Sciatic nerve (tissue), 2 donors: ENCODE measurements at regions of chr7 and their contacts with region 1.

Region 1: GRCh38 chr7:30564243-30564892 is 30.3 kb upstream of the GARS1 start:
- DNase-seq: peak; percentile 89
- ATAC-seq: peak; percentile 90

Region 2: DNA sequence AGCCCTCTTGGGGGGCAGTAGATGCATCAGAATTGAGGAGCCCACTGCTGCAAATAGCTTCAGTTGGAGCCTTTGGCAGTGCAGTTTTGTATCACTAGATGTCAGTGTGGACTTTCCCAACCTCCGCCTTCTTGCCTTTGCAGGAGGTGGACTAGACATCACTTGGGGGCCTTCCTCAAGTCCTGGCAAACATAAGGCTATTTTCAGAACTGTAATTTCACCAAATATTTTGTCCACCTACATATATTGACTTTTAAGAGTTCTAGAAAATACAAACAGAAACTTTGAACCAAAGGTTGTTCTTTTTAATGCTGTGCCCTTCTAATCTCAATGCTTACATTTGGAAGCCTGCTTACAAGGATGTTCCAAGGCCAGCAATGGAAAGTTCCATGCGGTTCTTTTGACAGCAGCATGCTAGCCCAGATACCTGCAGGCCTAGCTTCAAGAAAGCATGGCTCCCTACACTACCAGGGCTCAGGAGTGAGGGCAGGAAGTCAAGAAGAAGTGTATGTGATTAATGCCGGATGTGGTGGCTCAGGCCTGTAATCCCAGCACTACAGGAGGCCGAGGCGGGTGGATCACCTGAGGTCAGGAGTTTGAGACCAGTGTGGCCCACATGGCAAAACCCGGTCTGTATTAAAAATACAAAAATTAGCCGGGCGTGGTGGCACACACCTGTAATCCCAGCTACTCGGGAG is 288.0 kb before region 1 on chr7:
- intact Hi-C with region 1: loop called (anchors 10 kb)
- DNase-seq: no peak
- ATAC-seq: peak; percentile 76

Region 3: GRCh38 chr7:30548762-30549344 is 15.5 kb before region 1 on chr7:
- intact Hi-C with region 1: no loop called
- DNase-seq: peak; percentile 81
- ATAC-seq: peak; percentile 94

Region 4: GRCh38 chr7:30717181-30717580 is 152.8 kb after region 1 on chr7:
- intact Hi-C with region 1: no loop called
- DNase-seq: no peak
- ATAC-seq: no peak